GM12878 (cell line): ENCODE measurements at regions of chr10 and their contacts with region 1.

Region 1: GRCh38 chr10:5987747-5988146 is 10.4 kb upstream of the IL15RA start:
- DNase-seq: no peak
- ATAC-seq: peak; percentile 91
- H3K4me3 ChIP-seq: no peak overlapping the region
- H3K27ac ChIP-seq: no peak overlapping the region
- H3K4me1 ChIP-seq: no peaks in the 10 kb centered on the region
- H3K27me3 ChIP-seq: no peaks in the 10 kb centered on the region
- CTCF ChIP-seq: no peak
- EP300 ChIP-seq: no peak
- POLR2A ChIP-seq: no peak
- RAD21 ChIP-seq: no peak

Region 2: DNA sequence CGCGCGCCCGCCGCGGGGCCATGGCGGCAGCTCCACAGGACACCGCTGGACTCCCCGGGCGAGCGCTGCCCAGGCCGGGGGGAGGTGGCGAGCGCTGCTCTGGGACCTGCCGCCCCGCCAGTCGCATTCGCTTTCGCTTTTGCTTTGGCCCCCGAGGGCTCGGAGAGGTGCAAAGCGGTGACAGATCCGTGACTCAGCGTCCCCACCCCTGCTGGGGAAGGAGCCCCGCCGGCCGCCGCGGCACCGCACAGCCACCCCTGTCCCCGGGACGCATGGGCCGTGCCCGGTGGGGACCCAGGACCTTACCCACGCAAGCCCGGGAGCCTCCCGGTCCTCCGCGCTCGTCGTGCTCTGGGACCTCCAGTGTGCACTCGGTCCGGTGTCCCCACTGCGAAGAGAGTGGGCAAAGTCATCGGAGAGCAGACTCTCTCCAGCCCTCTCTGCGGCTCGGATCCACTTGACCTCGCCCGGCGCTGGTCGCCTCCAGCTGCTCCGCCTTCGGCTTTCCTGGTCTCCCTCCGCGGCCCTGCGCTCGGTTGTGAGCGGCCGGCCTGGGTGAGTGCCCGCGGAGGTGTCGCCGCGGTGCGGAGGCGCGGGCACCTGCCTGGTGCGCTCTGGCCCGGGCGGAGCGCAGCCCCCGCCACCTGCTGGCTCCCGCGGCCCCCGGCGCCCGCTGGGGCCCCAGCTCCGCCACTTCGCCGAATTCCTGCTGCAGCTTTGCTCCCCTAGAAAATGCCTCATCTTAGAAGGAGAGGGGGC is 10.1 kb before region 1 on chr10 and contains the start of gene IL15RA:
- CTCF ChIA-PET with region 1: interaction called, 3 read pairs
- POLR2A ChIA-PET with region 1: interaction called, 4 read pairs
- RAD21 ChIA-PET with region 1: interaction called, 14 read pairs
- SMC1A ChIA-PET with region 1: interaction called, 7 read pairs
- in situ Hi-C with region 1: no loop called
- intact Hi-C with region 1: no loop called
- DNase-seq: no peak
- ATAC-seq: peak; percentile 78
- H3K4me3 ChIP-seq: peak within 1 kb of the TSS; percentile 95
- H3K27ac ChIP-seq: peak within 1 kb of the TSS; percentile 88
- H3K4me1 ChIP-seq: peaks cover 12% of the 10 kb centered on the region
- H3K27me3 ChIP-seq: no peaks in the 10 kb centered on the region; a peak in 1 of 4 replicates
- CTCF ChIP-seq: peak; percentile 22 to 54 (median 30); a peak in 5 of 6 replicates
- EP300 ChIP-seq: no peak
- POLR2A ChIP-seq: peak; percentile 65
- RAD21 ChIP-seq: peak; percentile 21; the same call in 1 of the 2 replicates
- polyA plus RNA-seq, gene IL15RA: 2.0 to 4.2 TPM